ENCODE measurements at regions of chr3 and their contacts with region 1.

Region 1: DNA sequence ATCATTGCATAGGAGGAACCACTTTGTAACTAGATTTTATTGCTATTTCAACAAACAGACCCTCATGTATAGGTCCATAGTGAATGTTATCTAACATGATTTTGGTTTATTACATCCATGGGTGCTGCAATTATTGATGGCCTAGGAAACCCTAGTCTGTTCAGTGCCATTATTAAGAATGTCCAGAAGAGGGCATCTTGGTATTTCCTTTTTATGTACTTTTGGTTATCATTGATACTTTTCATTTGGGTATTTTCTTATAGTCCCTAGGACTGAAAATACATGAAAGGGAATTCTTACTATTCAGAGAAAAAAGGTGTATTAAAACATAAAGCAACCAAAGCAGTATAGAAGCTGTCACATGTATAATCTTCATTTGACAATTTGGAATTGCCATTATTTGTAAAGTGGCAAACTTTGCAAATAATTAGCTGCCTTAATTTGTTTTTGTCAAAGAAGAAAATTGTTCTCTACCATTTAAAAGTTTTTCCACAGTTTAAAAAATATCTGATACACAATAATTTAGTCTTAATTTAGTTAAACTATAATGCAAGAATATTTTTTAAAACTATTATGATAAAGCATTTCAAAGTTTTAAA is 48.7 kb downstream of the CNOT10 start:
- DNase-seq: no peak
- H3K4me3 Mint-ChIP-seq: no peak overlapping the region
- H3K27ac Mint-ChIP-seq: no peak overlapping the region
- H3K4me1 Mint-ChIP-seq: no peaks in the 10 kb centered on the region
- H3K27me3 Mint-ChIP-seq: no peaks in the 10 kb centered on the region
- CTCF ChIP-seq: peak; percentile 40

Region 2: GRCh38 chr3:32901432-32902409 is 168.0 kb after region 1 on chr3:
- CTCF ChIA-PET with region 1: interaction called, 3 read pairs
- intact Hi-C with region 1: loop called (anchors 1 kb)
- DNase-seq: peak; percentile 54
- H3K4me3 Mint-ChIP-seq: peak overlapping the region; percentile 87
- H3K27ac Mint-ChIP-seq: no peak overlapping the region
- H3K4me1 Mint-ChIP-seq: no peaks in the 10 kb centered on the region
- H3K27me3 Mint-ChIP-seq: peaks cover 25% of the 10 kb centered on the region
- CTCF ChIP-seq: no peak

Region 3: GRCh38 chr3:32934150-32934742 is 200.5 kb after region 1 on chr3:
- CTCF ChIA-PET with region 1: no interaction called
- intact Hi-C with region 1: loop called (anchors 1 kb)
- DNase-seq: peak; percentile 9
- H3K4me3 Mint-ChIP-seq: no peak overlapping the region
- H3K27ac Mint-ChIP-seq: no peak overlapping the region
- H3K4me1 Mint-ChIP-seq: no peaks in the 10 kb centered on the region
- H3K27me3 Mint-ChIP-seq: peaks cover 21% of the 10 kb centered on the region
- CTCF ChIP-seq: peak; percentile 26

Measured in Calu3 (cell line).